Activated T-helper 1 cell treated with anti-CD3 and anti-CD28 coated beads, Interleukin-12 subunit alpha, Interleukin-12 subunit beta, Interleukin-2, Interleukin-4 antibody, amounts not matched to agents 30 ng/mL and 10 ng/mL and 1 ng/mL, durations not matched to agents 14 hours and 24 hours and 36 hours (primary cell): ENCODE measurements at regions of chr18 and their contacts with region 1.

Region 1: GRCh38 chr18:21111341-21112139 is at the start of gene ROCK1:
- DNase-seq: peak; percentile 96
- H3K4me3 Mint-ChIP-seq: no peak within 1 kb of the TSS
- H3K27ac Mint-ChIP-seq: peak within 1 kb of the TSS; percentile 97
- H3K4me1 Mint-ChIP-seq: peaks cover 7% of the 10 kb centered on the region
- H3K27me3 Mint-ChIP-seq: peaks cover 8% of the 10 kb centered on the region
- total RNA-seq, gene ROCK1: 58.6 and 62.1 TPM in 2 replicates

Region 2: GRCh38 chr18:20971886-20972267 is 139.7 kb before region 1 on chr18:
- intact Hi-C with region 1: loop called (anchors 2 kb)
- DNase-seq: no peak
- H3K4me3 Mint-ChIP-seq: no peak overlapping the region
- H3K27ac Mint-ChIP-seq: no peak overlapping the region
- H3K4me1 Mint-ChIP-seq: no peaks in the 10 kb centered on the region
- H3K27me3 Mint-ChIP-seq: no peaks in the 10 kb centered on the region

Region 3: GRCh38 chr18:21049306-21049705 is 62.2 kb before region 1 on chr18:
- intact Hi-C with region 1: loop called (anchors 1 kb)
- DNase-seq: no peak
- H3K4me3 Mint-ChIP-seq: no peak overlapping the region
- H3K27ac Mint-ChIP-seq: no peak overlapping the region
- H3K4me1 Mint-ChIP-seq: peaks cover 18% of the 10 kb centered on the region
- H3K27me3 Mint-ChIP-seq: no peaks in the 10 kb centered on the region

Region 4: GRCh38 chr18:21100146-21100545 is 11.4 kb before region 1 on chr18:
- intact Hi-C with region 1: loop called (anchors 1 kb)
- DNase-seq: no peak
- H3K4me3 Mint-ChIP-seq: no peak overlapping the region
- H3K27ac Mint-ChIP-seq: no peak overlapping the region
- H3K4me1 Mint-ChIP-seq: peaks cover 31% of the 10 kb centered on the region
- H3K27me3 Mint-ChIP-seq: no peaks in the 10 kb centered on the region

Region 5: DNA sequence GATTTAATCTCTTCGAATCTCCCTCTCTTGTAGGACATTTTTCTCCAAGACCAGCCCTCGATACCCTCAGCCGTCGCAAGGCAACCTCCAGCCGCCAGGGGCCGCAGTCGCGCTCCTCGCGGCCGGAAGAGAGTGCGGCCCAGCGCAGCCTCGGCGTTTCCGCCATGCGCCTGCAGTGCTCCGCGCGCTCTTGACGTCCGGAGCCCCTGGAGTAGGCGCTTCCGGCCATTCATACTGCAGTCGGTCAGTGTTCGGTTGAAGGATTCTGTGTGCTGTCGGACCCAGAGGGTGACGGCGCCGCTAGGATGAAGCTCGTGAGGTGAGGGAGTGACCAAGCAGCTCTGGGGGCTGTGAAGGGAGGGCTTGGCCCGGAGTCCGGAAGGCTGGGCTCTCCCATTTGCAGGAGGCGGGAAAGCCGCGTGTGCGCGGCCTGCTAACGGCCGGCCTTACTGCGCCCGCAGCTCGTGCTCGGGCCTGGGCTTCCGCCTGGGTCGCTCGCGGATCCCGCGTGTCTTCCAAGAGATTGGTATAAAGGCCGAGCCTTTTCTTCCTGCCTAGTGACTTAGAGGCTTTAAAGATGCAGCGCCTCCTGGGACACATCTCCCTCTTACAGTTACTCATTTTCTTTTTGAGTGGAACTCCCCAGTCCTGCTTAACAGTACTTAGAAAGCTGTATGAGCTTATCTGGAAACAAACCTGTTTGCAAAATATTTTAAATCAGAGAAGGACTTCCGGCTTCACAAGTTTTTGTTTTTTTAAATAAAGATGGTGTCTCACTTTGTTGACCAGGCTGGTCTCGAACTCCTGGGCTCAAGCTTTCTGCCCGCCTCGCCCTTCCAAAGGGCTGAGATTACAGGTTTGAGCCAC is 500.8 kb after region 1 on chr18 and contains the start of gene SNRPD1:
- intact Hi-C with region 1: loop called (anchors 2 kb)
- DNase-seq: peak; percentile 89
- H3K4me3 Mint-ChIP-seq: peak within 1 kb of the TSS; percentile 96
- H3K27ac Mint-ChIP-seq: peak within 1 kb of the TSS; percentile 98
- H3K4me1 Mint-ChIP-seq: peaks cover 18% of the 10 kb centered on the region
- H3K27me3 Mint-ChIP-seq: no peaks in the 10 kb centered on the region
- total RNA-seq, gene SNRPD1: 170 and 173 TPM in 2 replicates

Region 6: GRCh38 chr18:21740724-21741510 is 629.4 kb after region 1 on chr18 and contains the start of gene MIB1:
- intact Hi-C with region 1: loop called (anchors 1 kb)
- DNase-seq: no peak
- H3K4me3 Mint-ChIP-seq: peak within 1 kb of the TSS; percentile 93
- H3K27ac Mint-ChIP-seq: peak within 1 kb of the TSS; percentile 94
- H3K4me1 Mint-ChIP-seq: peaks cover 45% of the 10 kb centered on the region
- H3K27me3 Mint-ChIP-seq: peaks cover 18% of the 10 kb centered on the region
- total RNA-seq, gene MIB1: 29.8 and 31.7 TPM in 2 replicates